CD14-positive monocyte (primary cell): ENCODE measurements at regions of chr6 and their contacts with region 1.

Region 1: DNA sequence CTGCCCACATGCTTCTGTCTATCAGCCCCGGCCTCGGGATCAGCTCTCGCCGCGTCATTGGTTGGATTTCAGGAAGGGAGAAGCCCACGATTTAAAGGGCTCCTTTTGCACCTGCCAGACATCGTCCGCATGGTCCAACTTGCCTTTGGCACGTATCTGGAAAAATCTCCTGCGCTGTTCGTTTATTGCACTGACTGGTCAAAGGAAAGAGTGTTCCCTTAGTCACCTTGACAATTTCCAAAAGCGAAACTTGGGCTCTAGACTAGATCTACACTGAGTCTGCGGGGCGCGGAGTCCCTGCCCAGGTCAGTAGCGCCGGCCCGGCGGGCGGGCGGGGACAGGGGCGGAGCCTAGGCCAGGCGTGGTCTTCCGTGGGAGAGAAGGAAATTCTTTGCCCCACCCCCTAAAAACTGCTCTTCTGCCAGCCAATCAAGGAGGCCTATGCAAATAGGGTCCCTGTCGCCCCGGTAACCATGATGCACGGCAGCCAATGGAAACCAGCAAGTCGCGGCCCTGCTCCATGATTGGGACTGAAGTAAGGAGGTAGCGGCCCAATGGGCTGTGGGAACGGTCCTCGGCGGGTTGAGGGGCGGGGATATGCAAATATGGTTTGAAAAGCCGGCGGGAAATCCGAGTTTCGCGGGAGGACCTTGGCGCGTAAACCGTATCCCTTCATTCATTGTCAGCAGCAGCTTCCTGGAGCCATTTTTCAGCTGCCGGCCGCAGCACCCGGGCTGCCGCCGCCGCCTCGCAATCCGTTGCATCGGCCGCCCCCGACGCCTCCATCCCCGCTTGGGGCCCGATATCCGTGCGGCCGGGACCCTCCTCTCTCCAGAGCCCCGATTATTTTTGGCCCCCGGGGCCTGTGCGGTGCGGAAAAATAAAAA is at the start of gene E2F3:
- DNase-seq: peak; percentile 99 to 100 (median 100)
- H3K4me3 ChIP-seq: peak within 1 kb of the TSS; percentile 75 to 94 (median 94)
- H3K4me3 Mint-ChIP-seq: peak within 1 kb of the TSS; percentile 95 to 97
- H3K27ac ChIP-seq: peak within 1 kb of the TSS; percentile 92
- H3K27ac Mint-ChIP-seq: peak within 1 kb of the TSS; percentile 94 to 99 (median 98)
- H3K4me1 ChIP-seq: peaks cover 14 to 37% of the 10 kb centered on the region in 2 donors
- H3K4me1 Mint-ChIP-seq: peaks cover 20% of the 10 kb centered on the region
- H3K27me3 ChIP-seq: no peaks in the 10 kb centered on the region
- H3K27me3 Mint-ChIP-seq: peaks cover 1 to 5% (median 4%) of the 10 kb centered on the region in 3 donors
- CTCF ChIP-seq: no peak
- polyA plus RNA-seq, gene E2F3: 7.5 to 14.6 (median 8.9) TPM

Region 2: DNA sequence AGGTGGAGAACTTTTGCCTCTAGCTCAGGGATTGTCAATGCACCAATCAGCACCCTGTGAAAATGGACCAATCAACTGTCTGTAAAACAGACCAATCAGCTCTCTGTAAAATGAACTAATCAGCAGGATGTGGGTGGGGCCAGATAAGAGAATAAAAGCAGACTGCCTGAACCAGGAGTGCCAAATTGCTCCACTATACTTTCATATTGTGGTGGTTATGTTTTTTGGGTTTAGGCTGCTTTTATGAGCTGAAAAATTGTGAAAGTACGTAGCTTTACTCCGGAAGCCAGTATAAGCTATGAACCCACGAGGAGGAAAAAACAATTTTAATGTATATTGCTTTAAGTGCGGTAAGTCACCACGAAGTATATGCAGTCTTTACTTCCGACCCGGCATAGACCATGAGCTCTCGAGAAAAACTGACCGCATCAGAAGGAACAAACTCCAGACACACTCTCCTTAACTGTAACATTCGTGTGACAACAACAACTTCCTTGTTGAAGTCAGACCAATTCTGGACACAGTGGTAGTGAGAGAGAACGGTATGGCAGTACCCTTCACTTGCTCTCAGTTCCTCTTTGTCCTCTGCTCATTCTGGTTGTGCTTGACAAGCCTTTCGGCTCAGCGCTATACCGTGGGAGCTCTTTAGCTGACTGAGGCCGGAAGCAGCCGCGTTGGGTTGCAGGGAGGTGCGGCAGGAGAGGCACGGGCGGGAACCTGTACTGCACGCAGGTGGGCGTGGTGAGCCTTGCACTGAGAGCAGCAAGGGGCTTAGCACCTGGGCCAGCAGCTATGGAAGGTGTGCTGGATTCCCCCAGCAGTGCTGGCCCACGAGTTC is 81.7 kb before region 1 on chr6:
- intact Hi-C with region 1: loop called in 1 of 2 experiments (anchors 5 kb)
- DNase-seq: peak; percentile 94 to 96 (median 96)
- H3K4me3 ChIP-seq: peak overlapping the region; percentile 28 to 82 (median 70)
- H3K4me3 Mint-ChIP-seq: peak overlapping the region; percentile 76 to 91
- H3K27ac ChIP-seq: peak overlapping the region; percentile 81 to 90
- H3K27ac Mint-ChIP-seq: peak overlapping the region; percentile 93 to 98 (median 94)
- H3K4me1 ChIP-seq: peaks cover 9 to 13% of the 10 kb centered on the region in 2 donors
- H3K4me1 Mint-ChIP-seq: peaks cover 15% of the 10 kb centered on the region
- H3K27me3 ChIP-seq: no peaks in the 10 kb centered on the region
- H3K27me3 Mint-ChIP-seq: peaks cover 0 to 1% (median 0%) of the 10 kb centered on the region in 3 donors
- CTCF ChIP-seq: no peak

Region 3: DNA sequence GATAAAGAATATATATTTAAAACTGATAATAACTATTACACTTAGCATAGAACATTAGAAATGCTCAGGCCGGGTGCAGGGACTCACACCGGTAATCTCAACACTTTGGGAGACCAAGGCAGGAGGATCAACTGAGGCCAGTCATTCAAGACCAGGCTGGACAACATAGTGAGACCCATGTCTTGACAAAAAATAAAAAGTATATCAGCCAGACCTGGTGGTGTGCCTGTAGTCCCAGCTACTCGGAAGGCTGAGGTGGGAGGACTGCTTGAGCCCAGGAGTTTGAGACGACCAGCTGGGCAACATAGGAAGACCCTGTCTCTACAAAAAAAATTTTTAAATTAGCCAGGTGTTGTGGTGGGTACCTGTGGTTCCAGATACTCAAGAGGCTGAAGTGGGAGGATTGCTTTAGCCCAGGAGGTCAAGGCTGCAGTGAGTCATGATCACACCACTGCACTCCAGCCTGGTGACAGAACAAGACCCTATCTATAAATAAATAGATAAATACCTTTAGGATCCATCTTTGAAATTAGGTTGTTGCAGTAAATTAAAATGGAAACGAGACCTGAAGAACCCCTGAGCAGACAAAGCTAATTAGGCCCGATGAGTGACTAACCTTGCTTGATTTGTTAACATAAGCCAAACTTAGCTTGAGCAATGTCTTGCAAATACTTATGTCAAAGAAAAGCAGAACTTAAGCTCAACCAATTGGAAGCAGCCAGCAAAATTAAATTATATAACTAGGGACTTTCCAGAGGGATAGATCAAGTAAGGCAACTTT is 75.6 kb before region 1 on chr6:
- intact Hi-C with region 1: loop called (anchors 5 kb)
- DNase-seq: peak; percentile 85 to 93 (median 93)
- H3K4me3 ChIP-seq: no peak overlapping the region
- H3K4me3 Mint-ChIP-seq: no peak overlapping the region
- H3K27ac ChIP-seq: peak overlapping the region; percentile 71 to 79
- H3K27ac Mint-ChIP-seq: peak overlapping the region; percentile 79 to 90 (median 84)
- H3K4me1 ChIP-seq: peaks cover 10 to 13% of the 10 kb centered on the region in 2 donors
- H3K4me1 Mint-ChIP-seq: peaks cover 11% of the 10 kb centered on the region
- H3K27me3 ChIP-seq: no peaks in the 10 kb centered on the region
- H3K27me3 Mint-ChIP-seq: peaks cover 4 to 7% (median 5%) of the 10 kb centered on the region in 3 donors
- CTCF ChIP-seq: no peak

Region 4: DNA sequence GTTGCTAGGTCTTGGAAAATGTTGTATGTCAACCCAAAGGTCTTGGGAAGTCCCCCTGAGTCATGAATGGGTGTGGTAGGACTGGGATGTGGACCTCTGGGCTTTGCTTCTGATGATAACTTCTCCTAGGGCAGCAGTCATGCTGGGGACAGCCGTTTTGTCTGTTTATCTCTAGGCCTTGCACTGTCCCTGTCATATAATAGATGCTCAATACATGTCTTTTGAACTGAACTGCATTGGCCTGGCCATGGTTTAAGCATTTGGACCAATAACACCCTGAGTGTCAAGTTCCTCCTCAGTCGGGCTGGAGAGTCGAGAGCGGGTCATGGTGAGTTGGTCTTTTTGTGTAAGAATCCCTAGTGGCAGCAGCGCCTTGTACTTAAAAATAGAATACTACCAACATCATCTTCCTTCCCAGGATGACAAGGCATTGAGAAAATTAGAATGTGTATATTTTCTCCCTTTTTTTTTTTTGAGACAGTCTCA is 43.4 kb after region 1 on chr6:
- intact Hi-C with region 1: loop called (anchors 5 kb)
- DNase-seq: peak; percentile 81 to 95 (median 83)
- H3K4me3 ChIP-seq: no peak overlapping the region
- H3K4me3 Mint-ChIP-seq: peak overlapping the region in 1 of 2 donors; percentile 70
- H3K27ac ChIP-seq: peak overlapping the region; percentile 76 to 88
- H3K27ac Mint-ChIP-seq: peak overlapping the region; percentile 91 to 99 (median 96)
- H3K4me1 ChIP-seq: peaks cover 48 to 52% of the 10 kb centered on the region in 2 donors
- H3K4me1 Mint-ChIP-seq: peaks cover 72% of the 10 kb centered on the region
- H3K27me3 ChIP-seq: no peaks in the 10 kb centered on the region
- H3K27me3 Mint-ChIP-seq: no peaks in the 10 kb centered on the region
- CTCF ChIP-seq: no peak

Region 5: GRCh38 chr6:20483897-20484497 is 82.5 kb after region 1 on chr6:
- intact Hi-C with region 1: loop called (anchors 10 kb)
- DNase-seq: peak; percentile 44 to 69 (median 65)
- H3K4me3 ChIP-seq: peak overlapping the region; percentile 6 to 68 (median 10)
- H3K4me3 Mint-ChIP-seq: peak overlapping the region; percentile 46 to 85
- H3K27ac ChIP-seq: peak overlapping the region; percentile 40 to 80
- H3K27ac Mint-ChIP-seq: peak overlapping the region; percentile 85 to 96 (median 90)
- H3K4me1 ChIP-seq: peaks cover 41% of the 10 kb centered on the region in 2 donors
- H3K4me1 Mint-ChIP-seq: peaks cover 63% of the 10 kb centered on the region
- H3K27me3 ChIP-seq: no peaks in the 10 kb centered on the region
- H3K27me3 Mint-ChIP-seq: peaks cover 0 to 2% (median 0%) of the 10 kb centered on the region in 3 donors
- CTCF ChIP-seq: peak; percentile 19

Region 6: DNA sequence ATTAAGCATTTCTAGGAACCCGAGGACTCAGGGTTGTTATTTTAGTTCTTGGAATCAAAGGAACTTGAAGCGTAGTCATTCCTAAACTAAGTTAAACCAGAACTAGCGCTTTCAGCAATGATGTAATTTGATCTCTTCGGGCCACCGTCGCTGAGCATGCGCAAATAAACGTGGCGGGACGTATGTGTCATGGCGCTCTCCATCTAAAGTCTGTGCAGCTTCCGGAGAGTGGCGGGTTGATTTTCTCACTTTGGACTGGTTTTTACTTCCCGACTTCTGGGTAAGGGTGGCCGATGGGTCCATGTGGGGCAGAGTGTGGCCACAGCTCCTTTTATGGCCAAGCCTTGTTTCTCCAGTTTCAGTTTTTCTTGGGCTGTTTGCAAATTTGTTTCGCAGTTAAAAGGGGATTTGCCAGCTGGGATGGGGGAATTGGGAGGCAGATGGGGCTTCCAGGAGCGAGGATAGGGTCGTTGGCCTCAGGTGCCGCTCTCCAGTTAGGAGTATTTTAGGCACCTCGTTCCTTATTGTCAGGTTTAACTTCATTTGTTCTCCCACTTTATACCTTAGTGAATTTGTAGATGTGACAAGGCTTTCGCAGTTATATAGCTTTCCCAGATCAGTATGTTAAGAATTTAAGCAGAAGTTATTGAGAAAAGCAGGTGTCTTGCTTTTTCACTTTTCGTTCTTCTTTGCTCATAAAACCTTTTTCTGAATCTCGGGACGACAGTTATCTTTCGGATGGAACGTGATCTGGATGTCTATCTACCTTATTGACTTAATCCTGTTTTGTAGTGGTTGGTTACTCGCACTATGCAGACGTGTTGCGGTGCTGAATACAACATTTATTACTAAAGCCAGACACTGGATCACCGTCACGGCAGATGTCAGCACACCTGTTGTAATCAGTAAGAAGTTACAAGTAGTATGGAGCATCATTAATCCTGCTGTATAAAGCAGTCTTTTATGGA is 133.1 kb after region 1 on chr6 and contains the start of gene CDKAL1:
- intact Hi-C with region 1: loop called (anchors 2 to 5 kb)
- DNase-seq: peak; percentile 87 to 91 (median 87)
- H3K4me3 ChIP-seq: peak within 1 kb of the TSS; percentile 76 to 98 (median 88)
- H3K4me3 Mint-ChIP-seq: peak within 1 kb of the TSS; percentile 90 to 96
- H3K27ac ChIP-seq: peak within 1 kb of the TSS; percentile 89 to 94
- H3K27ac Mint-ChIP-seq: peak within 1 kb of the TSS; percentile 91 to 97 (median 96)
- H3K4me1 ChIP-seq: peaks cover 11 to 22% of the 10 kb centered on the region in 2 donors
- H3K4me1 Mint-ChIP-seq: peaks cover 12% of the 10 kb centered on the region
- H3K27me3 ChIP-seq: no peaks in the 10 kb centered on the region
- H3K27me3 Mint-ChIP-seq: peaks cover 0 to 1% (median 0%) of the 10 kb centered on the region in 3 donors
- CTCF ChIP-seq: no peak
- polyA plus RNA-seq, gene CDKAL1: 3.2 to 12.4 (median 8.3) TPM